ENCODE measurements at regions of chr12 and their contacts with region 1.

Region 1: DNA sequence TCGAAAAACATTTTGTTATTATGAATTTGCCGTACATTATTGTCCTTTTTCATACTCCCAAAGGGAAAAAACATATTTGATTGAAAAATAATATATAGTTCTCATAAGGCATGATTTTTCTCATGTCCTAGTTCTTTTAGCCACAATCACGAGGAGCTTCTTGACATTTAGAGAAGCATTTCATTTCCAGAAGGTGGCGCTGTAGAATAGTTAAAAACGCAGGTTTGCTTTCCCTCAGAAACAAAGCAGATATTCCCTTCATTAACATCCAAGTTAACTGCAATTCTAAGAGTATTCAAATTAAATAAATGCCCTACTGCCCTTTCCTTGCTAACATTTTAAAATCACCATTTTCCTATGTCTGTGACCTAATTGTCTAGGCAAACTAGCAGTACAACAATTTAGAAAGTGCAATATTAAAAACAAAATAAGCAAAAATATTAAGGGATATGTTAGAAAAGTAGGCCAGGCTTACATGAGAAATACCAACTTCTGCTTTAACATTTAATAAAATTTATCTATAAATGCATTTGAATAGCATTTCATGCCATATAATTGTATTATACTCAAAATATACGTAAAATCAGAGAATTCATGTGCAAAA is 10.9 kb upstream of the PIK3C2G start:
- DNase-seq: no peak
- ATAC-seq: peak; percentile 48

Region 2: DNA sequence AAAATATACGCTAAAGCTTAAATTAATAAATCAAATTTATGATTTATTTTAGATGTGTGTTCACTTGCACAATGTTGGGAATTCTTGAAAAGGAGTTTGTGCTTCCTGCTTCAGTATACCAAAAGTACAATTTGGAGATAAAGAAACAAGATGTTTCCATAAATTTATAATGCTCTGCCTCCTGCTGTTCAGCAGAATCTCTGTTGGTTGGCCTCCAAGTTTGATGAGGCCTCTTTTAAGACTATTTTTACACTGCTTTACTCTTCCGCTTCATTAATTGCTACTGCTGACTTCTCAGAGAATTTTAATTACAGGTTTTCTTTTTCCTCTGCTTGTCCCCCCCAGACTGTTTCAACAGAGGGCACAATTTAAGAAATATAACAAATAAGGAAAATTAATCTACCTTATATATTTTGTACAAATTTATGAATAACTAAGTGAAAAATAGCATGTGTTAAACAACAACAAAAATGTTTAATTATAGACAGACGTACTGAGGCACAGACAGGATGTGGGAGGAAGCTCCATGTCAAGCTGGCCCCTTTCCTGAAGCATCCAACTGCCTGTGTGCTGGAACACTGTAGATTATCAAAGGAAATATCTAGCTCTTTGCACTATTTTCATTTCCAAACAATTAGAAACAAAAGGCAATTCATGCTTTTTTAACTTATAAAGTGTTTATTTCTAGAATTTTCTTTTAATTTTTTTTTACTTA is 94.8 kb after region 1 on chr12:
- intact Hi-C with region 1: no loop called
- DNase-seq: no peak
- ATAC-seq: no peak

Region 3: GRCh38 chr12:19186722-19187661 is 936.6 kb after region 1 on chr12:
- intact Hi-C with region 1: loop called (anchors 10 kb)
- DNase-seq: no peak
- ATAC-seq: peak; percentile 67